GM12878 (cell line): ENCODE measurements at regions of chr4 and their contacts with region 1.

Region 1: DNA sequence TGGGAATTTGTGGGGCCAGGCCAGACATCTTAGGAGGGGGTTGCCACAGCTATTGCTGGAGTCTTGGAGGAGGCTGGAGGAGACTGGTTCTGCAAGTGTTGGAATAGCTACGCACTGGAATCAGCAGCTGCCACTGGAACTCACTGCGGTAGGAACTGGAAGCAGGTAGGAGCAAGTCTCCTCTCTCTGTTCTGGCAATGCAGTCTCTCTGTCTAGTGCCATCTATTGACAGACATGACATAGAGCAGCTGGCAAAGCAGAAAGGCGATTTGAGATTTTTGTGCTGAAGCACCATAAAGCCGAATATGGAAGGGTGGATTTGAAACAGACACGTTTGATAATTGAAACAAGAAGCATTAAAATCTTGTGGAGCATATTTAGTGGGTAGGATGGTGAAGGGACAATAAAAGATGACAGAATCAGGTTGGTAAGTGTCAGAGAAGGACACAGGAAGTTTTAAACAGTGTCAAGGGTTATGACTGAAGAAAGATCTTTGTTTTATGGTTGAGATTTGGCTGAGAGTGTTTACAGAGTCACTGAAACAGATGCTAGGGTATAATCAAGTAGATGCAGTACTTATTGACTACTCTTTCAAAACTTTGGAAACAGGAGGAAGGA is 23.5 kb upstream of the SYNPO2 start:
- DNase-seq: no peak
- ATAC-seq: peak; percentile 90
- H3K4me3 ChIP-seq: no peak overlapping the region
- H3K27ac ChIP-seq: no peak overlapping the region
- H3K4me1 ChIP-seq: no peaks in the 10 kb centered on the region
- H3K27me3 ChIP-seq: no peaks in the 10 kb centered on the region
- CTCF ChIP-seq: peak; percentile 70 to 80 (median 72)
- EP300 ChIP-seq: no peak
- POLR2A ChIP-seq: no peak
- RAD21 ChIP-seq: peak; percentile 62

Region 2: GRCh38 chr4:118716304-118716703 is 148.9 kb before region 1 on chr4:
- CTCF ChIA-PET with region 1: no interaction called
- POLR2A ChIA-PET with region 1: no interaction called
- RAD21 ChIA-PET with region 1: no interaction called
- SMC1A ChIA-PET with region 1: no interaction called
- in situ Hi-C with region 1: no loop called
- intact Hi-C with region 1: no loop called
- DNase-seq: no peak
- ATAC-seq: no peak
- H3K4me3 ChIP-seq: no peak overlapping the region
- H3K27ac ChIP-seq: no peak overlapping the region
- H3K4me1 ChIP-seq: no peaks in the 10 kb centered on the region
- H3K27me3 ChIP-seq: no peaks in the 10 kb centered on the region
- CTCF ChIP-seq: no peak
- EP300 ChIP-seq: no peak
- POLR2A ChIP-seq: no peak
- RAD21 ChIP-seq: no peak

Region 3: GRCh38 chr4:118826723-118827444 is 38.3 kb before region 1 on chr4:
- CTCF ChIA-PET with region 1: interaction called, 11 read pairs
- POLR2A ChIA-PET with region 1: no interaction called
- RAD21 ChIA-PET with region 1: interaction called, 4 read pairs
- SMC1A ChIA-PET with region 1: interaction called, 10 read pairs
- in situ Hi-C with region 1: no loop called
- intact Hi-C with region 1: no loop called
- DNase-seq: no peak
- ATAC-seq: peak; percentile 59
- H3K4me3 ChIP-seq: peak overlapping the region; percentile 35
- H3K27ac ChIP-seq: 0 out of 2 replicates have a peak overlapping the region, but pooled peaks have one; percentile 2
- H3K4me1 ChIP-seq: peaks cover 18% of the 10 kb centered on the region
- H3K27me3 ChIP-seq: no peaks in the 10 kb centered on the region
- CTCF ChIP-seq: no peak
- EP300 ChIP-seq: no peak
- POLR2A ChIP-seq: no peak
- RAD21 ChIP-seq: no peak

Region 4: GRCh38 chr4:118835571-118836300 is 29.5 kb before region 1 on chr4 and contains the start of gene SEC24D:
- CTCF ChIA-PET with region 1: interaction called, 13 read pairs
- POLR2A ChIA-PET with region 1: no interaction called
- RAD21 ChIA-PET with region 1: interaction called, 3 read pairs
- SMC1A ChIA-PET with region 1: interaction called, 6 read pairs
- in situ Hi-C with region 1: no loop called
- intact Hi-C with region 1: no loop called
- DNase-seq: no peak
- ATAC-seq: peak; percentile 83
- H3K4me3 ChIP-seq: peak within 1 kb of the TSS; percentile 77
- H3K27ac ChIP-seq: peak within 1 kb of the TSS; percentile 92
- H3K4me1 ChIP-seq: peaks cover 8% of the 10 kb centered on the region
- H3K27me3 ChIP-seq: no peaks in the 10 kb centered on the region
- CTCF ChIP-seq: no peak
- EP300 ChIP-seq: no peak
- POLR2A ChIP-seq: peak; percentile 84
- RAD21 ChIP-seq: no peak
- polyA plus RNA-seq, gene SEC24D: 12.8 to 16.0 TPM

Region 5: GRCh38 chr4:118850488-118851173 is 14.6 kb before region 1 on chr4:
- CTCF ChIA-PET with region 1: interaction called, 45 read pairs
- POLR2A ChIA-PET with region 1: interaction called, 3 read pairs
- RAD21 ChIA-PET with region 1: interaction called, 5 read pairs
- SMC1A ChIA-PET with region 1: interaction called, 5 read pairs
- in situ Hi-C with region 1: no loop called
- intact Hi-C with region 1: no loop called
- DNase-seq: no peak
- ATAC-seq: peak; percentile 92
- H3K4me3 ChIP-seq: peak overlapping the region; percentile 76
- H3K27ac ChIP-seq: peak overlapping the region; percentile 34
- H3K4me1 ChIP-seq: peaks cover 3% of the 10 kb centered on the region; the same call in 1 of the 2 replicates
- H3K27me3 ChIP-seq: no peaks in the 10 kb centered on the region; a peak in 1 of 4 replicates
- CTCF ChIP-seq: no peak
- EP300 ChIP-seq: no peak
- POLR2A ChIP-seq: 0 out of 2 replicates have a peak, but pooled peaks have one; percentile 33
- RAD21 ChIP-seq: no peak